HCT116 (cell line): ENCODE measurements at regions of chr2 and their contacts with region 1.

Region 1: DNA sequence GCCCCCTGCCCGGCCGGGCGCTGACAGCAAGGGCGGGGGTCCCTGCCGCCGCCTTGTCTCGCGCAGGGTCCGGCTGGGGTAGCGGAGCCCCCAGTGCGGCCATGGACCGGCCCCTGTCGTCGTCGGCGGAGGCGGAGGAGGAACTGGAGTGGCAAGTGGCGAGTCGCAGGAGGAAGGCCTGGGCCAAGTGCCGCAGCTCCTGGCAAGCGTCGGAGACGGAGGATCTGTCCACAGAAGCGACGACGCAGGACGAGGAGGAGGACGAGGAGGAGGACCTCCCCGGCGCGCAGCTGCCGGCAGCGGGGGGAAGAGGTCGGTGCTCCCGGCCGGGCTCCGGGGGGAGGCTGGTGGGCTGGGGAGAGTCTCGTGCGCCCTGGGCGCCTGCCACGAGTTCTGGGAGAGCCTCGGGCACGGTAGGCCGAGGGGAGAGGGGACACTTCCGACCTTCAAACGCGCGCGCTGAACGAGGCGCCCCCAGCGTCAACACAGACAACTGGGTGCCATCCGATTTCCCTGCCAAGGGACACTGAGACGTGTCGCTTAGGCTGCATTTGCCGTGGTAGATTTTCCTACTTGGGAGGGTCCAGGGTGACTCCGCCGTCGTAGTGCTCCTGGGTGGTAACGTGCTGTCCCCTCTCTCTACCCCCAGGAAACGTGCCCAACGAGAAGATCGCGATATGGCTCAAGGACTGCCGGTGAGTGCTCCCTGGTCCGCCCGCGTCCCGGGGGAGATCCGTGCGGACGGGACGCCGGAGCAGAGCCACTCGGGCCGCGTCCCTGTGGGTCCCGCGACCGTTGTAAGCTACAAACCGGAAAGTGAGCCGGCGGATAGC is 652 bp downstream of the ITPRID2 start:
- DNase-seq: peak; percentile 69
- ATAC-seq: peak; percentile 66; the same call in 1 of the 2 replicates
- H3K4me3 ChIP-seq: peak overlapping the region; percentile 74 to 81
- H3K27ac ChIP-seq: peak overlapping the region; percentile 99
- H3K4me1 ChIP-seq: peaks cover 54 to 79% of the 10 kb centered on the region in 2 experiments
- H3K27me3 ChIP-seq: no peaks in the 10 kb centered on the region
- CTCF ChIP-seq: 0 out of 6 replicates have a peak, but pooled peaks of 2 of the 3 experiments have one; percentile 10 to 26
- POLR2A ChIP-seq: no peak
- RAD21 ChIP-seq: no peak; the same call in 1 of the 2 replicates

Region 2: DNA sequence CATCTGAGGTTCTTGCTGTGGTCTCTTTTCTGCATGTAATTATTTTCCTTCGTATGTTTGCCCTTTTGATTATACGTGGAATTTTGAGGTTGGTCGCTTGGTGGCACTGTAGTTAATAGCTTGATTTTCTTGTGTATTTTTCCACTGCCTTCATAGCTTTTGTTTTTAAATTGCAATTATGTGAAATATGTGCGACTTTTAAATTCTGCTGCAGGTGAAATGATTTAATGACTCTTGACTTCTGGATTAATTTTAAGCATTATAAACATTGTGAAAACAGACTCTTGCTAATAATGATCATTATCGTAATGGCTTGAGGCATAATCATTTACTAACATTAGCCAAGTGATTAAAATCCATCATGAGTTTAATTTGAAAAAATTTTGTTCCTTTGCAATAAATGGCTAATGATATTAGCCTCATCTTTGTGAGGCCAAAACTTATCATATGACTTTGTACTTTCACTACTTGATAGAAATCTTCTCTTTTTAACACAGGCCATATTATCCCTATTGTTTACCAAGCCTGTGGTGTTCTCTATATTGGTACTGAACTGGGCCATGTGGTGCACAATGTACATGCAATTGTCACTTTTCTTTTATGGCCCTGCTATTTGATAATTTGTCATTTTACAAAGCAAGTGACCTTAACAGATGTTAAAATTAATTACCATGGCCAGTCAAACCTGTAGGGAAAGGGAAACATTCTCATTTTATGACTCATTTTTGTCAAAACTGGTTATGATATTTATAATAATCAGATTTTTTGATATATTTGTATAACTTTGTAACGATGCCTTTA is 149.1 kb before region 1 on chr2:
- CTCF ChIA-PET with region 1: interaction called, 4 read pairs
- POLR2A ChIA-PET with region 1: interaction called, 13 read pairs
- RAD21 ChIA-PET with region 1: interaction called in 1 of 2 experiments, 3 read pairs
- intact Hi-C with region 1: loop called (anchors 1 kb)
- DNase-seq: peak; percentile 68
- ATAC-seq: peak; percentile 57
- H3K4me3 ChIP-seq: peak overlapping the region in 1 of 2 experiments; percentile 7; a peak in 1 of 4 replicates
- H3K27ac ChIP-seq: peak overlapping the region; percentile 93
- H3K4me1 ChIP-seq: peaks cover 31 to 63% of the 10 kb centered on the region in 2 experiments
- H3K27me3 ChIP-seq: no peaks in the 10 kb centered on the region
- CTCF ChIP-seq: peak; percentile 47 to 85 (median 60)
- POLR2A ChIP-seq: no peak
- RAD21 ChIP-seq: peak; percentile 93

Region 3: DNA sequence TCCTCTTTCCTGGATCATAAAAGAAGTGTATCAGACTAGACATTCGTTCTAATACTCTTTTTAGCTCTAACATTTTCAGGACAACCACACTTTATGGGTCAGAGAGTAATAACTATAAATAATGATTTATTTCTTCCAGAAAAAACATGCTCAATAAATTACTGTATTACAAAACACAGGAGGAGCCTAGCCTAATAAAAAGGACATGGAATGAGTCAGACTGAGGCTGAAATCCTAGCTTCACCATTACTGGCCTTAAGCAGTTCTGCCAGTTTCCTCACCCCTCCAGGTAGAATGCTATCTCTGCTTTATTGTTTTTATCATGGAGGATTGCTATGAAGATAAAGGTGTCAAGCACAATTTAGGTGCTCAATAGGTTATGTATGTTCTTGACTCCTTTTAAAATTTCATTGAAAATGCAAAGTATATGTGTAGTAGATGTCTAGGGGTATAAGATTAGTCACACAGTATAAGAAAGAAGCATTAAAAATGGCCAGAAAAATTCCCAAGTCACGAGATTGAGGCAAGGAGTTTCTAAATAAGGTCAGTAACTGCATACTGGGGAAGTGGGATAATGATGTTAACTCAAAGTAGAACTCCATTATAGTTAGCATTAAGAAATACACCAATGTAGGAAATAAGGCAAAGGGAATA is 106.4 kb before region 1 on chr2:
- CTCF ChIA-PET with region 1: no interaction called
- POLR2A ChIA-PET with region 1: interaction called, 25 read pairs
- RAD21 ChIA-PET with region 1: no interaction called
- intact Hi-C with region 1: loop called (anchors 2 kb)
- DNase-seq: peak; percentile 78
- ATAC-seq: peak; percentile 23; the same call in 1 of the 2 replicates
- H3K4me3 ChIP-seq: no peak overlapping the region
- H3K27ac ChIP-seq: peak overlapping the region; percentile 92
- H3K4me1 ChIP-seq: peaks cover 83 to 100% of the 10 kb centered on the region in 2 experiments
- H3K27me3 ChIP-seq: no peaks in the 10 kb centered on the region
- CTCF ChIP-seq: no peak
- POLR2A ChIP-seq: no peak
- RAD21 ChIP-seq: no peak; the same call in 1 of the 2 replicates

Region 4: GRCh38 chr2:181810823-181811695 is 81.1 kb before region 1 on chr2:
- CTCF ChIA-PET with region 1: no interaction called
- POLR2A ChIA-PET with region 1: interaction called, 9 read pairs
- RAD21 ChIA-PET with region 1: interaction called in 1 of 2 experiments, 3 read pairs
- intact Hi-C with region 1: loop called (anchors 2 kb)
- DNase-seq: peak; percentile 98
- ATAC-seq: peak; percentile 81
- H3K4me3 ChIP-seq: peak overlapping the region in 1 of 2 experiments; percentile 6; a peak in 1 of 4 replicates
- H3K27ac ChIP-seq: peak overlapping the region; percentile 98
- H3K4me1 ChIP-seq: peaks cover 88 to 96% of the 10 kb centered on the region in 2 experiments
- H3K27me3 ChIP-seq: no peaks in the 10 kb centered on the region
- CTCF ChIP-seq: no peak
- POLR2A ChIP-seq: peak; percentile 61
- RAD21 ChIP-seq: peak; percentile 53

Region 5: GRCh38 chr2:181904022-181904632 is 11.9 kb after region 1 on chr2:
- CTCF ChIA-PET with region 1: interaction called, 3 read pairs
- POLR2A ChIA-PET with region 1: interaction called, 17 read pairs
- RAD21 ChIA-PET with region 1: no interaction called
- intact Hi-C with region 1: no loop called
- DNase-seq: no peak
- ATAC-seq: no peak
- H3K4me3 ChIP-seq: no peak overlapping the region
- H3K27ac ChIP-seq: peak overlapping the region; percentile 99
- H3K4me1 ChIP-seq: peaks cover 71 to 98% of the 10 kb centered on the region in 2 experiments
- H3K27me3 ChIP-seq: no peaks in the 10 kb centered on the region
- CTCF ChIP-seq: peak; percentile 24 to 59 (median 30); a peak in 3 of 6 replicates
- POLR2A ChIP-seq: no peak
- RAD21 ChIP-seq: peak; percentile 48